Caco-2 (cell line): ENCODE measurements at regions of chr9 and their contacts with region 1.

Region 1: GRCh38 chr9:125189361-125190289 is at the start of gene PPP6C:
- DNase-seq: peak; percentile 96 to 97
- H3K4me3 ChIP-seq: peak within 1 kb of the TSS; percentile 86
- H3K4me3 Mint-ChIP-seq: peak within 1 kb of the TSS; percentile 94
- H3K27ac Mint-ChIP-seq: peak within 1 kb of the TSS; percentile 95
- H3K4me1 ChIP-seq: 0 out of 2 replicates have a peak, but pooled peaks cover 7% of the 10 kb centered on the region
- H3K4me1 Mint-ChIP-seq: no peaks in the 10 kb centered on the region
- H3K27me3 ChIP-seq: no peaks in the 10 kb centered on the region
- H3K27me3 Mint-ChIP-seq: no peaks in the 10 kb centered on the region
- CTCF ChIP-seq: peak; percentile 38 to 83
- total RNA-seq, gene PPP6C: 37.4 and 41.2 TPM in 2 replicates

Region 2: GRCh38 chr9:125200210-125201047 is 10.8 kb after region 1 on chr9 and contains the start of gene RABEPK:
- CTCF ChIA-PET with region 1: interaction called, 3 read pairs
- POLR2A ChIA-PET with region 1: interaction called, 13 read pairs
- intact Hi-C with region 1: loop called (anchors 1 kb)
- DNase-seq: peak; percentile 94 to 97
- H3K4me3 ChIP-seq: peak within 1 kb of the TSS; percentile 69
- H3K4me3 Mint-ChIP-seq: peak within 1 kb of the TSS; percentile 80
- H3K27ac Mint-ChIP-seq: peak within 1 kb of the TSS; percentile 62
- H3K4me1 ChIP-seq: peaks cover 13% of the 10 kb centered on the region
- H3K4me1 Mint-ChIP-seq: peaks cover 12% of the 10 kb centered on the region
- H3K27me3 ChIP-seq: no peaks in the 10 kb centered on the region
- H3K27me3 Mint-ChIP-seq: no peaks in the 10 kb centered on the region
- CTCF ChIP-seq: no peak
- total RNA-seq, gene RABEPK: 28.1 and 28.4 TPM in 2 replicates

Region 3: DNA sequence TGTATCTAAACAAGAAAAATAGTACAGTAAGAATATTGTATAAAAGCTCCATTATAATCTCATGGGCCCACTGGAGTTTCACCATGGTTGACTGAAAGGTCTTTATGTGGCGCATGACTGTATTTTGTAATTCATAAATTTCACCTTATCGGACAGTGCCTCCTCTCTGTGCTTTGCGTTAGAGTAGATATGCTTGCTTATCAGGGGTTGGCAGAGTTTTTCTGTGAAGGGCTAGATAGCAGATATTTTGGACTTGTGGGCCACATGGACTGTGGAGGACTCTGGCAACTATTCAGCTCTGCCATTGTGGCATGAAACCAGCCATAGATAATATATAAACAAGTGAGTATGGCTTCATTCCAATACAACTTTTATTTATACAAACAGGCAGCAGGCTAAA is 95.2 kb after region 1 on chr9:
- CTCF ChIA-PET with region 1: no interaction called
- POLR2A ChIA-PET with region 1: no interaction called
- intact Hi-C with region 1: no loop called
- DNase-seq: no peak
- H3K4me3 ChIP-seq: no peak overlapping the region
- H3K4me3 Mint-ChIP-seq: no peak overlapping the region
- H3K27ac Mint-ChIP-seq: no peak overlapping the region
- H3K4me1 ChIP-seq: peaks cover 6% of the 10 kb centered on the region; the same call in 1 of the 2 replicates
- H3K4me1 Mint-ChIP-seq: no peaks in the 10 kb centered on the region
- H3K27me3 ChIP-seq: no peaks in the 10 kb centered on the region
- H3K27me3 Mint-ChIP-seq: no peaks in the 10 kb centered on the region
- CTCF ChIP-seq: no peak